ENCODE measurements at regions of chr22 and their contacts with region 1.

Region 1: GRCh38 chr22:17830043-17830961 is 56.0 kb upstream of the BID start:
- DNase-seq: peak; percentile 63 to 89 (median 83)
- ATAC-seq: peak; percentile 97
- H3K4me3 ChIP-seq: no peak overlapping the region
- H3K4me3 Mint-ChIP-seq: no peak overlapping the region
- H3K27ac ChIP-seq: no peak overlapping the region
- H3K27ac Mint-ChIP-seq: no peak overlapping the region
- H3K4me1 ChIP-seq: no peaks in the 10 kb centered on the region
- H3K4me1 Mint-ChIP-seq: peaks cover 8% of the 10 kb centered on the region
- H3K27me3 ChIP-seq: no peaks in the 10 kb centered on the region
- H3K27me3 Mint-ChIP-seq: no peaks in the 10 kb centered on the region
- CTCF ChIP-seq: peak; percentile 100

Region 2: GRCh38 chr22:17815789-17816188 is 14.5 kb before region 1 on chr22:
- CTCF ChIA-PET with region 1: interaction called, 29 read pairs
- POLR2A ChIA-PET with region 1: no interaction called
- intact Hi-C with region 1: no loop called
- DNase-seq: no peak
- ATAC-seq: no peak
- H3K4me3 ChIP-seq: no peak overlapping the region
- H3K4me3 Mint-ChIP-seq: no peak overlapping the region
- H3K27ac ChIP-seq: no peak overlapping the region
- H3K27ac Mint-ChIP-seq: no peak overlapping the region
- H3K4me1 ChIP-seq: no peaks in the 10 kb centered on the region
- H3K4me1 Mint-ChIP-seq: no peaks in the 10 kb centered on the region
- H3K27me3 ChIP-seq: no peaks in the 10 kb centered on the region
- H3K27me3 Mint-ChIP-seq: no peaks in the 10 kb centered on the region
- CTCF ChIP-seq: no peak

Region 3: DNA sequence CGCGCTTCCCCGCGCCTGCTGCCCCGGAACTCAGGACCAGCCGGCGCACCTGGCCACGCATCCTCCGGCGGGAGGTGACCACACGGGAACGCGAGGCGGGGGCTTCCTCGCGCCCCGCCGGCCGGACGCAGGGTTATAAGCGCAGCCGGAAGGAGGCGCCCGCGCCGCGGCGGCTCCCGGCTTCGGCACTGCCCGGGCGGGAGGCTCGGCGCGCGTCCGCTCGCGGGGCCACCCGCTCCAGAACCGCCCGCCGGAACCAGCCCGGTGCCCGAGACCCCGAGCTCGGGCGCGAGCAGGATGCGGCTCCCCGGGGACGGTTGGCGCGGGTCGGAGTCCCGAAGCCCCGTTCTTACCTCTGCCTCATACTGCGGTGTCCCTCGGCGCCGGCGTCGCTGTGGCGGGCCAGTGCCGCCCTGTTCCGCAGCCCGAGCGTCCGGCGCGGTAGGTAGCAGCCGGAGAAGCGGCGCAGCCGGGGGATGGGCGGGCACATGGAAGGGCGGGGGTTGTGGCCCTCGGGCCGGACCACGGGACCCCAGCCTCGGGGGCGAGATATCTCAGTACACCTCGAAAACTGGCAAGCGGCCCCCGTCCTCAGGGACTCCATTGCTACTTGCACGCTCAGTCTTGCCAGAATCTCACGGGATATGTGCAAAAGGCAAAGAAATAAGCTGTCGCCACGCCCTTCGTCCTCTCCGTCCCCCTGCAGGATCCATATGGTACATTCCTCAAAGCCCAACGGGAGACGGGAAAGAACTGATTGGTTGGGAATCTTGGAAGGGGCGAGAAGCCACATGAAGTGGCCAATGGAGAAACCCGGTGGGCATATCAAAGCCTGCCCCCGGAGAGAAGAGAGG is 171.0 kb after region 1 on chr22:
- CTCF ChIA-PET with region 1: interaction called, 6 read pairs
- POLR2A ChIA-PET with region 1: no interaction called
- intact Hi-C with region 1: loop called in 1 of 2 experiments (anchors 10 kb)
- DNase-seq: peak in 8 of 9 experiments; percentile 34 to 88 (median 54)
- ATAC-seq: peak; percentile 40
- H3K4me3 ChIP-seq: peak overlapping the region; percentile 87 to 92
- H3K4me3 Mint-ChIP-seq: peak overlapping the region; percentile 86
- H3K27ac ChIP-seq: peak overlapping the region; percentile 53 to 79
- H3K27ac Mint-ChIP-seq: peak overlapping the region; percentile 85
- H3K4me1 ChIP-seq: peaks cover 29% of the 10 kb centered on the region
- H3K4me1 Mint-ChIP-seq: peaks cover 41% of the 10 kb centered on the region
- H3K27me3 ChIP-seq: no peaks in the 10 kb centered on the region
- H3K27me3 Mint-ChIP-seq: peaks cover 12% of the 10 kb centered on the region
- CTCF ChIP-seq: peak; percentile 31

Region 4: GRCh38 chr22:18024276-18024947 is 194.1 kb after region 1 on chr22 and contains the start of gene MICAL3:
- CTCF ChIA-PET with region 1: interaction called, 67 read pairs
- POLR2A ChIA-PET with region 1: no interaction called
- intact Hi-C with region 1: loop called in 1 of 2 experiments (anchors 1 kb)
- DNase-seq: peak; percentile 41 to 82 (median 56)
- ATAC-seq: peak; percentile 93
- H3K4me3 ChIP-seq: peak within 1 kb of the TSS; percentile 27 to 60
- H3K4me3 Mint-ChIP-seq: peak within 1 kb of the TSS; percentile 90
- H3K27ac ChIP-seq: no peak within 1 kb of the TSS
- H3K27ac Mint-ChIP-seq: no peak within 1 kb of the TSS
- H3K4me1 ChIP-seq: peaks cover 5% of the 10 kb centered on the region
- H3K4me1 Mint-ChIP-seq: peaks cover 14% of the 10 kb centered on the region
- H3K27me3 ChIP-seq: peaks cover 10 to 12% of the 10 kb centered on the region in 2 experiments
- H3K27me3 Mint-ChIP-seq: peaks cover 43% of the 10 kb centered on the region
- CTCF ChIP-seq: peak; percentile 47
- total RNA-seq, gene MICAL3: 7.0 to 11.7 TPM

Region 5: GRCh38 chr22:18070556-18071306 is 240.4 kb after region 1 on chr22:
- CTCF ChIA-PET with region 1: interaction called, 140 read pairs
- POLR2A ChIA-PET with region 1: no interaction called
- intact Hi-C with region 1: no loop called
- DNase-seq: no peak
- ATAC-seq: no peak
- H3K4me3 ChIP-seq: no peak overlapping the region
- H3K4me3 Mint-ChIP-seq: no peak overlapping the region
- H3K27ac ChIP-seq: no peak overlapping the region
- H3K27ac Mint-ChIP-seq: no peak overlapping the region
- H3K4me1 ChIP-seq: peaks cover under 1% of the 10 kb centered on the region
- H3K4me1 Mint-ChIP-seq: peaks cover under 1% of the 10 kb centered on the region
- H3K27me3 ChIP-seq: peaks cover 0 to 2% of the 10 kb centered on the region in 2 experiments
- H3K27me3 Mint-ChIP-seq: peaks cover 18% of the 10 kb centered on the region
- CTCF ChIP-seq: no peak

Measured in CD8-positive, alpha-beta T cell (primary cell).